ENCODE measurements at regions of chr22 and their contacts with region 1.

Region 1: GRCh38 chr22:37953437-37954179 is at the starts of genes C22orf23 and POLR2F:
- DNase-seq: peak; percentile 86 to 98 (median 93)

Region 2: DNA sequence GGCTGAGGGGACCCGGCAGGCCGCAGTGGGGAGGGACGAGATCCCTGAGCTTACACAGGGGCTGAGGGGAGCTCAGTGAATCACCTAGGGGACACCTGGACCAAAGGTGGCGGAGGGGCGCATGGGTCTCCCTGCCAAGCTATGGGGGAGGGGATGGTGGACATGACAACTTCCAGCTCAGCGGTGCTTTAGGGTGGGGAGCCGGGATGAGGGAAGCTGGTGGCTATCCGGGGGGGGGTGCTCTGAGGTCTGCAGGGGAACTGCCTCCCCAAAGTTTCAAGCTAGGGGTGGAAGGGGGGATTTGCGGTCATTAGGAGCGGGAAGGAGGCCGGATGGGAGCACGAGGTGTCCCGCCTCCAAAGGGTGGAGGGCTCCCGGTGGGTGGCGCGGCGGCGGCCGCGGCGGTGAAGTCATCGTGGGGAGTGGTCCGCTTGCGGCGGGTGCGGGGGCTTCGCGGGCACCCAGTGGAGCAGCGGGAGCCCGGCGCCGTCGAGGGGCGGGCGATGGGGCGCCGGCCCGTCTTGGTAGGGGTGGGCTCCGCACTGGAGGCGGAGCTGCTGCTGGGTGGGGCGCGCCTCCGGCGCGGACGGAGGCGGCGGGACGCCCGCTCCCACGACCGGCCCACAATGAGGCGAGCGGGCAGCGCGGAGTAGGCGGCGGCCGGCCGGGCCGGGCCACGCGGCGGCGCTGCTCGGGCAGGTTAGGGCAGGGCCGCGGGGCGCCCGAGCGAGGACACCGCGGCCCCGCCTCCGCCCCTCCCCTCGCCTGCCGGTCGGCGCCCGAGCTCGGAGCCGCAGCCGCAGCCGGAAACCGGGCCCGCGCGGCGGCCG is 47.9 kb before region 1 on chr22 and contains the start of gene MICALL1:
- intact Hi-C with region 1: loop called (anchors 10 kb)
- DNase-seq: peak in 6 of 10 donors; percentile 21 to 92 (median 60)

Region 3: DNA sequence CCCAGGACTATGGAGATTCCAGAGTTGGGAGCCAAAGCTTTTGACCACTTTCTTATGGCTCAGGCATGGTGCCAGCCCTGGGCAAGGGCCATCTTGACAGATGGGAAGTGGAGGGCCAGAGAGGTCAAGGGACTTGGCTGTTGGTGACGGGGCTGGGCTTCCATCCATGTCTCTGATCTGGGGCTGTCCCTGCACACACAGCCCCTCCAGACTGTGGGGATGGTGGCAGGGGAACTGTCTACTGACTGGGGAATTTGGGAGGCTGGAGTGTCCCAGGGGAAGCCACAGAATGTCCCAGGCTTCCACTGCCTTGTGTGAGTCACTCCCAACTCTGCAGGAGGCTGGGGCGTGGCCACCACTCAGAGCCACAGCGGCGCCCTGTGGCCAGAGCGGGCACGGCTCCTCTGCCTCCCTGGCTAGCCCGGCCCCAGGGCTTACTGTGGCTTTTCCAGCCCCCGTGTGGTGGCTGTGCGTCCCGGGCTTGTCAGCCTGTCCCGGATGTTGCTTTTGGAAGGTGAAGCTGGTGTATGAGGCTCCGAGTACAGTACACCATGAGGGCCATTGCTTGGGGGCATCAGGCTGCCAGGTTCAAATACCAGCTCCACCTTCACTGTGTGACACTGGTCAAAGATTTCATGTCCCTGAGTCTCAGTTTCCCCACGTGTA is 19.8 kb before region 1 on chr22:
- intact Hi-C with region 1: no loop called
- DNase-seq: peak; percentile 64 to 98 (median 86)

Measured in posterior cingulate gyrus (tissue), 11 donors.